ENCODE measurements at regions of chr12 and their contacts with region 1.

Region 1: GRCh38 chr12:120317224-120318105 is 10.1 kb downstream of the PLA2G1B start:
- DNase-seq: peak; percentile 95
- H3K4me3 ChIP-seq: peak overlapping the region; percentile 70
- H3K27me3 ChIP-seq: no peaks in the 10 kb centered on the region; the same call in 1 of the 2 replicates
- CTCF ChIP-seq: peak; percentile 84

Region 2: GRCh38 chr12:120086801-120087621 is 230.5 kb before region 1 on chr12:
- CTCF ChIA-PET with region 1: no interaction called
- POLR2A ChIA-PET with region 1: no interaction called
- DNase-seq: peak; percentile 93
- H3K4me3 ChIP-seq: peak overlapping the region; percentile 54
- H3K27me3 ChIP-seq: no peaks in the 10 kb centered on the region
- CTCF ChIP-seq: peak; percentile 99

Region 3: DNA sequence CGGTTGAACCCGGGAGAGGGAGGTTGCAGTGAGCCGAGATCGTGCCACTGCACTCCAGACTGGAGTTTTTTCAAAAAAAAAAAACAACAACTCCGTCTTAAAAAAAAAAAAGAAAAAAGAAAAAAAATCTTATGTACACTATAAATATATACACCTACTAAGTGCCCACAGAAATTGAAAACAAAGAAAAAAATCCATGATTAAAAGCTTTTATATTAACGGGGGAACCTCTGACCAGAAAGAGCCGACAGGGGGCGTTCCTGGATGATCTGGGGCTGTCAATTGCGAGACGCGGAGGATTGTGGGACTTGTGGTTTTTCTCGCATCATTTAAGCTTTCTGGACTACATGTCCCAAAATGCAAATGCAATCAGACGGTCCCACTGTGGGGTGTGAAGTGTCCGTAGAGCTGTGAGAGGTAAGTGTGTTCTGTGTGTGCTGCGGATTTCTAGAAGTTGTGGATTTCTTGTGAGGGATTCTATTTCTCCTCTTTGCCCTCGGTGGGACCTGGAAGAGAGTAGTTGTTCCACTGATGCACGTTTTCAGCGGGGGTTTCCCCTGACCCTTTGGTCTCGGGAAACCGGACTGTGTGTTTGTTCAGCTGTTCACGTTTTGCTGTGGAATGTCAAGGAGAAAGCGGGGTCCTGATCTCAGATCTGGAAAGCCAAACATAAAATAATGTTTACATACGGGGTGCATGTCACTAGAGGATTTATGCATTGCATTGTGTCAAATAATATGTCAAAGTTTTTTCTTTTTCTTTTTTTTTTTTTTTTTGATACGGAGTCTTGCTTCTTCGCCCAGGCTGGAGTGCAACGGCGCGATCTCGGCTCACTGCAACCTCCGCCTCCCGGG is 15.3 kb before region 1 on chr12 and contains the start of gene SIRT4:
- CTCF ChIA-PET with region 1: interaction called, 19 read pairs
- POLR2A ChIA-PET with region 1: no interaction called
- DNase-seq: peak; percentile 71
- H3K4me3 ChIP-seq: peak within 1 kb of the TSS; percentile 44
- H3K27me3 ChIP-seq: no peaks in the 10 kb centered on the region
- CTCF ChIP-seq: peak; percentile 89
- polyA plus RNA-seq, gene SIRT4: 1.2 and 1.5 TPM in 2 replicates

Region 4: DNA sequence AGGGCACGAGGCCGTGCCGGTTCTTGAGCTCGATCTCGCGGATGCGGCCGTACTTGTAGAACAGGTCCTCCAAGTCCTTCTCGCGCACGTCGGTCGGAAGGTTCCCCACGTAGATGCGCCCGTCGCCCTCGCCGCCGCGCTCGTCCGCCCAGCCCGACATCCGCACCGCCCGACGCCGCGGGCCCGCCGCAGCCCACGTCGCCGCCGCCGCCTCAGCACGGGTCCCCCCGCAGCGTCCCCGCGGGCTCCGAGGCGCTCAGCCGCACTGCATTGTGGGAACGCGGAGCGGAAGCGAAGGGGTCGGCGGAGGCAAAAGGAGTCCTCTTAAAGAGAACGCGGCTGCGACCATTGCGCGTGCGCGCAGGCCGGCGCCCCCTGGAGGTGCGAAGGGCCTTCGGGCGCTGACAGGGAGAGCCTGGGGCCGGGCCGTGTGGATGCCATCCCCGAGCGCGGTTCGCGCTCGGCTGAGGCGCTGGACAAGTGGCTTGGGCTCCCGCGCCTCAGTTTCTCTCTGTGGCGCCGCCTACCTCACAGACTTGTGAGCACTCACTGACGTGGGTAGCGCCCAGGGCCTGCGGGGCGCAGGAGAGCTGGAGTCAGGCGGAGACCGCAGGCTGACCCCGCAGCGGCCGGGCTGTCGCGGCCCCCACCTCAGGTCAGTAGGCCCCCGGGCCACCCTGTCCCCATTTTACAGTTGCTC is 152.1 kb after region 1 on chr12 and contains the start of gene SRSF9:
- CTCF ChIA-PET with region 1: no interaction called
- POLR2A ChIA-PET with region 1: no interaction called
- DNase-seq: peak; percentile 74
- H3K4me3 ChIP-seq: peak within 1 kb of the TSS; percentile 80
- H3K27me3 ChIP-seq: no peaks in the 10 kb centered on the region
- CTCF ChIP-seq: peak; percentile 92
- polyA plus RNA-seq, gene SRSF9: 88.0 and 108 TPM in 2 replicates

Measured in BJ (cell line).